SK-N-SH (cell line): ENCODE measurements at regions of chr20 and their contacts with region 1.

Region 1: GRCh38 chr20:14888134-14888533 is 550.7 kb upstream of the FLRT3 start:
- DNase-seq: peak; percentile 33
- H3K4me3 ChIP-seq: no peak overlapping the region
- H3K27ac ChIP-seq: peak overlapping the region; percentile 60 to 89; a peak in 3 of 4 replicates
- H3K4me1 ChIP-seq: peaks cover 12 to 20% of the 10 kb centered on the region in 2 experiments; a peak in 3 of 4 replicates
- H3K27me3 ChIP-seq: no peaks in the 10 kb centered on the region
- CTCF ChIP-seq: no peak
- EP300 ChIP-seq: peak; percentile 46 to 87; a peak in 3 of 4 replicates
- RAD21 ChIP-seq: no peak; the same call in none of the 2 replicates

Region 2: GRCh38 chr20:14566505-14566904 is 321.6 kb before region 1 on chr20:
- CTCF ChIA-PET with region 1: no interaction called
- POLR2A ChIA-PET with region 1: no interaction called
- DNase-seq: no peak
- H3K4me3 ChIP-seq: no peak overlapping the region
- H3K27ac ChIP-seq: no peak overlapping the region
- H3K4me1 ChIP-seq: no peaks in the 10 kb centered on the region
- H3K27me3 ChIP-seq: no peaks in the 10 kb centered on the region
- CTCF ChIP-seq: no peak
- EP300 ChIP-seq: no peak
- RAD21 ChIP-seq: no peak

Region 3: GRCh38 chr20:14915356-14915755 is 27.2 kb after region 1 on chr20:
- CTCF ChIA-PET with region 1: interaction called, 12 read pairs
- POLR2A ChIA-PET with region 1: no interaction called
- DNase-seq: peak; percentile 61
- H3K4me3 ChIP-seq: peak overlapping the region in 1 of 2 experiments; percentile 9; a peak in 1 of 4 replicates
- H3K27ac ChIP-seq: peak overlapping the region in 1 of 2 experiments; percentile 78; a peak in 3 of 4 replicates
- H3K4me1 ChIP-seq: peaks cover 10 to 37% of the 10 kb centered on the region in 2 experiments; a peak in 3 of 4 replicates
- H3K27me3 ChIP-seq: no peaks in the 10 kb centered on the region
- CTCF ChIP-seq: no peak
- EP300 ChIP-seq: peak; percentile 76 to 97
- RAD21 ChIP-seq: peak; percentile 47